ENCODE measurements at regions of chr13 and their contacts with region 1.

Region 1: DNA sequence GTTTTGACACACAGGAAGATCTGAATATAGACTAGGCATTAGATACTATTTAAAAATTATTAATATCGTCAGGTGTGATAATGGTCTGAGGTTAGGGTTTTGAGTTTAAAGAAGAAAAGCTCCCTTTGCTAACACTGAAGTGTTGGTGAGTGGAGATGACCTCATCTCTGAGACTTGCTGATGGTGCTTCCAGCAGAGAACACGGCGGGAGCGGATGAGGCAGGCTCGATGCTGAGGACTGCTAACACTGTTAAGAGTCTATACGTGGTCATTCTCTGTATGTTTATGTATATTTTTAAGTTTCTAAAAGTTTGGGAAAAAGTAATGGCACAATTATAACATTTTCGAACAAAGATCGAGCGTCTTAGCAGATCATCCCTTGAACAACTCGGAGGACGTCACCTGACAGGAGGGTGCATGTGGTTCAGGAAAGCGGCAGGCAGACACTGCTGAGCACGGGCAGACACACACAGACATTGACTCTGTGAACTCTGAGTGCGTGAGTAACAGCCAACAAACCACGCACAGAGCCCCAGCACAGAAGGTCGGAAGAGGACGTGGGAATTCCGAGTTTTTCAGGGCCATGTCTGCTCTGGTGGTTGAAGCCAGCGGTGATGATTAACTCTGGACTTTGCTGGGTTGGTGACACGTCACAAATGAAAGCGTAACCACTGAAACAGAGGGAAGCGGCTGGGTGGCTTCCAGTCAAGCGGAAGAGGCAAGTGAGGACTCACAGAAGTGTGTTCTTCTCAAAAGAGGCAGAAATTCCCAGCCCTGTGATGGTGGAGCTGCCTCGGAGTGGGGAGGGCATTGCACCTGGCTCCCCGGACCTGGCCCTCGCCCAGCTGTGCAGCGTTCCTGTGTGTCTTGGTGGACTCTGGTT is 91.9 kb upstream of the TEX29 start:
- DNase-seq: no peak
- ATAC-seq: peak in 1 of 4 donors; percentile 38
- H3K4me3 ChIP-seq: no peak overlapping the region
- H3K27ac ChIP-seq: no peak overlapping the region
- H3K4me1 ChIP-seq: peaks cover 0 to 2% (median 0%) of the 10 kb centered on the region in 4 donors
- H3K27me3 ChIP-seq: no peaks in the 10 kb centered on the region
- CTCF ChIP-seq: no peak
- POLR2A ChIP-seq: no peak

Region 2: GRCh38 chr13:111061358-111062045 is 167.0 kb before region 1 on chr13:
- intact Hi-C with region 1: loop called (anchors 5 kb)
- DNase-seq: no peak
- ATAC-seq: peak in 1 of 4 donors; percentile 10
- H3K4me3 ChIP-seq: no peak overlapping the region
- H3K27ac ChIP-seq: no peak overlapping the region
- H3K4me1 ChIP-seq: no peaks in the 10 kb centered on the region
- H3K27me3 ChIP-seq: no peaks in the 10 kb centered on the region
- CTCF ChIP-seq: no peak
- POLR2A ChIP-seq: no peak

Region 3: GRCh38 chr13:111281751-111282311 is 53.3 kb after region 1 on chr13:
- intact Hi-C with region 1: no loop called
- DNase-seq: no peak
- ATAC-seq: peak; percentile 47 to 70 (median 50)
- H3K4me3 ChIP-seq: no peak overlapping the region
- H3K27ac ChIP-seq: peak overlapping the region; percentile 28 to 58 (median 48)
- H3K4me1 ChIP-seq: peaks cover 0 to 13% (median 0%) of the 10 kb centered on the region in 4 donors
- H3K27me3 ChIP-seq: no peaks in the 10 kb centered on the region
- CTCF ChIP-seq: no peak
- POLR2A ChIP-seq: no peak